Naive thymus-derived CD4-positive, alpha-beta T cell (primary cell): ENCODE measurements at regions of chr2 and their contacts with region 1.

Region 1: DNA sequence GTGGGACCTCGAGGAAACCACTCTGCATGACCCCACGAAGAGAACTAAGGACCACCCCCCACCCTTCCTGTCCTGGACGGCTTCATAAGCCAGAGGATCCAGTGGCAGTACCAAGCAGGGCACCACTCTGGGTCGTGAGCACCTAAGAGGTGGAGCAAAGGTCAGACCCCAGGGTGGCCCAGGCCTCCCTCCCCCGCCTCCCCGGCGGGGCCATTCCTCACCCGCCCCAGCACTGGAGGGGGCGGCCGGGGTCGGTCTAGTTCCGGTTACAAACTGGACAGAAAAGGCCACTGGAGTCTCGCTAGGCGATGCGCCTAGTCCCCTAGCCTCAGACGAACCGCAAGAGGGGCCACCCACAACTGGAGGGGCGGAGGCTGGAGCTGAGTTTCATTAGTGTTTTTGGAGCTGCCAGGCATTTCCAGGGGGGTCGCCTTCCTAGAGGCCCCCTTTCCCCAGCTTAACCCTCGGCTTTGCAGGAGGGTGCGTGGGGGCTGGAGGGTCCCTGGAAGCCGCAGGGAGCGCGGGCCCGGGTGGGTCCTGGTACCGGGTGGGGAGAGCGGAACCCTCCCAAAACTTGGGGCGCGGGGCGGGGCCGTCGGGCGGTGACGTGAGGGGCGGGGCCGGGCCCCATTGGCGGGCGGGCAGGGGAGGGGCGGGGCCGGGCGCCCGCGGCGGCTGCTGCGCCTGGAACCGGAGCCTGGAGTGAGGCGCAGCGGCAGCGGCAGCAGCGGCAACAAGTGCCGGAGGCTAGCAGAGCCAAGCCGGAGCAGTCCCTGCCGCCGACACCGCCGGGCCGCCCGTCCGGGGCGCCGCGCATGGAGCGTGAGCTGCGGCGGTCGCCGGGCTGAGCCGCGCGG is at the start of gene B3GNT2:
- DNase-seq: peak; percentile 66 to 88 (median 80)
- ATAC-seq: peak; percentile 89
- H3K4me3 ChIP-seq: peak within 1 kb of the TSS; percentile 98
- H3K4me3 Mint-ChIP-seq: peak within 1 kb of the TSS; percentile 82 to 93 (median 89)
- H3K27ac ChIP-seq: peak within 1 kb of the TSS; percentile 86
- H3K27ac Mint-ChIP-seq: peak within 1 kb of the TSS in 7 of 9 donors; percentile 83 to 95 (median 91)
- H3K4me1 ChIP-seq: peaks cover 27 to 36% of the 10 kb centered on the region in 2 donors
- H3K4me1 Mint-ChIP-seq: peaks cover 28 to 44% (median 31%) of the 10 kb centered on the region in 7 donors
- H3K27me3 ChIP-seq: no peaks in the 10 kb centered on the region
- H3K27me3 Mint-ChIP-seq: peaks cover 0 to 6% (median 0%) of the 10 kb centered on the region in 5 donors
- total RNA-seq, gene B3GNT2: 16.9 to 37.0 (median 34.7) TPM

Region 2: GRCh38 chr2:60881047-60881932 is 1314.4 kb before region 1 on chr2 and contains the start of gene REL:
- CTCF ChIA-PET with region 1: no interaction called
- POLR2A ChIA-PET with region 1: no interaction called
- intact Hi-C with region 1: loop called in 1 of 2 experiments (anchors 5 kb)
- DNase-seq: peak; percentile 77 to 95 (median 88)
- ATAC-seq: peak; percentile 92
- H3K4me3 ChIP-seq: peak within 1 kb of the TSS; percentile 83
- H3K4me3 Mint-ChIP-seq: peak within 1 kb of the TSS; percentile 91 to 98 (median 96)
- H3K27ac ChIP-seq: peak within 1 kb of the TSS; percentile 100
- H3K27ac Mint-ChIP-seq: peak within 1 kb of the TSS; percentile 93 to 100 (median 98)
- H3K4me1 ChIP-seq: peaks cover 11 to 24% of the 10 kb centered on the region in 2 donors
- H3K4me1 Mint-ChIP-seq: peaks cover 22 to 39% (median 33%) of the 10 kb centered on the region in 7 donors
- H3K27me3 ChIP-seq: no peaks in the 10 kb centered on the region
- H3K27me3 Mint-ChIP-seq: no peaks in the 10 kb centered on the region
- total RNA-seq, gene REL: 18.9 to 78.8 (median 26.4) TPM

Region 3: DNA sequence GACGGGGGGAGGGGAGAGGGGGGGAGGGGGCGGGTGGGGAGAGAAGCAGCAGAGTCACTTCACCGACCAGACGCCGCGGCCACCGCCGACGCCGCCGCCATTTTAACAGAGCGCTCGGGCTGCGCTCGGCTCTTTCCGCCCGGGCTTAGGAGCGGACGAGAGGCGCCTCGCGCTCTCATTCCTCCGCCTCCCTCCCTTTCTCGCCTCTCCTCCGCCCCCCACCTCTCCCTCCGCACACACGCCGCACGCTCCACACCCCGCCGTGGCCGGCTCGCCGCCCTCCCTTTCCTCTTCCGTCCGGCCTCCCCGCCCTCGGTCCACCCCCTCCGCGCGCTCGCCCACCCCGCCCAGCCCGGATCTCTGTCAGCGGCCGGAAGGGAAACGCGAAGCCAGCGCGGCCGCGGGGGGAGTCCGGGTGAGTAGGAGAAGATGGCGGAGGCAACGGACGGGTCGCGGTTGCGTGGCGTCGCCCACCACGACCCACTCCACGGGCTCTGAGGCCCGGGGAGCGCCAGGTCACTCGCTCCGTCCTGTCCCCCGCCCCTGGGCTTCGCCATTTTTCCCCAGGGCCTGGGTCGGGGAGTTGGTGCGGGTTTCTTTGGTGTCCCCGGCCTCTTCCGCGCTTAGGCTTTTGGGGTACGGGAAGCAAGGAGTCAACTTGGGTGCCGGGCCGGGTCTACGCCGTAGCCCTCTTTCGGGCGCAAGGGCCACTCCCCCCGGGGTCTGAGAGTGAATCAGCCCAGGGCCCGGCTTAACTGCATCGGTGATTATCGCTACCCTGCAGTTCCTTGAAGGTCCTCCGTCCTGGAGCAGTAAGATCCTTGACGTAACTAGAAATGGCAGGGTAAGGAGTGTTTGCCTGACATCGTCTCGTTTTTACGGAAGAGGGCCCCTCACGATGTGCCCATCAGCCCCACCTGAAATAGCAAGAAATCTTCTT is 724.4 kb before region 1 on chr2 and contains the start of gene USP34:
- CTCF ChIA-PET with region 1: no interaction called
- POLR2A ChIA-PET with region 1: no interaction called
- intact Hi-C with region 1: loop called in 1 of 2 experiments (anchors 2 kb)
- DNase-seq: peak; percentile 77 to 93 (median 88)
- ATAC-seq: peak; percentile 91
- H3K4me3 ChIP-seq: peak within 1 kb of the TSS; percentile 97
- H3K4me3 Mint-ChIP-seq: peak within 1 kb of the TSS; percentile 85 to 99 (median 96)
- H3K27ac ChIP-seq: peak within 1 kb of the TSS; percentile 98
- H3K27ac Mint-ChIP-seq: peak within 1 kb of the TSS; percentile 96 to 99 (median 97)
- H3K4me1 ChIP-seq: peaks cover 14 to 27% of the 10 kb centered on the region in 2 donors
- H3K4me1 Mint-ChIP-seq: peaks cover 11 to 45% (median 33%) of the 10 kb centered on the region in 7 donors
- H3K27me3 ChIP-seq: no peaks in the 10 kb centered on the region
- H3K27me3 Mint-ChIP-seq: no peaks in the 10 kb centered on the region
- total RNA-seq, gene USP34: 109 to 186 (median 165) TPM

Region 4: GRCh38 chr2:61905372-61906185 is 290.1 kb before region 1 on chr2 and contains the start of gene COMMD1:
- CTCF ChIA-PET with region 1: no interaction called
- POLR2A ChIA-PET with region 1: no interaction called
- intact Hi-C with region 1: loop called (anchors 5 kb)
- DNase-seq: peak; percentile 64 to 81 (median 76)
- ATAC-seq: peak; percentile 99
- H3K4me3 ChIP-seq: peak within 1 kb of the TSS; percentile 76
- H3K4me3 Mint-ChIP-seq: peak within 1 kb of the TSS; percentile 95 to 98 (median 96)
- H3K27ac ChIP-seq: peak within 1 kb of the TSS; percentile 83
- H3K27ac Mint-ChIP-seq: peak within 1 kb of the TSS; percentile 80 to 97 (median 86)
- H3K4me1 ChIP-seq: peaks cover 0 to 12% of the 10 kb centered on the region in 2 donors
- H3K4me1 Mint-ChIP-seq: peaks cover 14 to 42% (median 30%) of the 10 kb centered on the region in 7 donors
- H3K27me3 ChIP-seq: no peaks in the 10 kb centered on the region
- H3K27me3 Mint-ChIP-seq: no peaks in the 10 kb centered on the region
- total RNA-seq, gene COMMD1: 15.6 to 28.3 (median 20.8) TPM

Region 5: GRCh38 chr2:62306751-62307468 is 111.3 kb after region 1 on chr2:
- CTCF ChIA-PET with region 1: no interaction called
- POLR2A ChIA-PET with region 1: no interaction called
- intact Hi-C with region 1: loop called (anchors 2 kb)
- DNase-seq: peak in 1 of 9 donors; percentile 42
- ATAC-seq: peak; percentile 25
- H3K4me3 ChIP-seq: no peak overlapping the region
- H3K4me3 Mint-ChIP-seq: peak overlapping the region in 5 of 10 donors; percentile 23 to 67 (median 54)
- H3K27ac ChIP-seq: no peak overlapping the region
- H3K27ac Mint-ChIP-seq: peak overlapping the region in 7 of 9 donors; percentile 1 to 86 (median 52)
- H3K4me1 ChIP-seq: peaks cover 29 to 84% of the 10 kb centered on the region in 2 donors
- H3K4me1 Mint-ChIP-seq: peaks cover 54 to 79% (median 71%) of the 10 kb centered on the region in 7 donors
- H3K27me3 ChIP-seq: no peaks in the 10 kb centered on the region
- H3K27me3 Mint-ChIP-seq: peaks cover 0 to 2% (median 0%) of the 10 kb centered on the region in 5 donors

Region 6: DNA sequence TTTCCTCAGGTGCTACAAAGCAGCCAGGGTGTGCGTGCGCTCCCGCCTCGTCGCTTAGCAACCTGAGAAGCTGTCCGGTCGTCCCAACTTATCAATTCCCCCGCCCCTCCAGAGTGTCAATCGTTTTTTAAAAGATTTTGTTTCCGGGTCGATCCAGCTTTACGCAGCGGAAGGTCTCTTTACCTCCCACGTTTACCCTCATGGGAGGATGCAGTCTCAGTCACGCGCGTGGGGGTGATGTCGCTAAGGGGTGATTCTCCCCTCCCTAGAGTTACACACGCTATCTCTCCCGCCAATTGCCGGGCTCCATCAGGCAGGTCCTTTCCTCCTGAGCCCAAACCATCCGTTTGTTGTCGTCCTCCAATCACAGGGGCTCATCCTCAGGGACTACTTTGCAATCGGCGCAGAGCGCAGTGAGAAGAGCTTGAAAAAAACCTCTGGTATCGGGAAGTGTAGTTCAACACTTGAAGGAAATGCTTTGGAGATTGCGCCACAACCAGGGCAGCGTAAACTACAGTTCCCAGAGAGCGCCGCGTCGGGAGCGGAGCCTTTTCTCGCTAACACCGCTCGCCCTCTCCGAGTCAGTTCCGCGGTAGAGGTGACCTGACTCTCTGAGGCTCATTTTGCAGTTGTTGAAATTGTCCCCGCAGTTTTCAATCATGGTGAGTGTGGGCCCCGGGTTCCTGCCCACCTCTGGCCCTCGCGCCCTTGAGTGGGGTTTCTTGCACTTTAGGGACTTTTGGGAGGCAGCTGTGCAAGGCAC is 1392.9 kb after region 1 on chr2 and contains the starts of genes MDH1 and WDPCP:
- CTCF ChIA-PET with region 1: no interaction called
- POLR2A ChIA-PET with region 1: no interaction called
- intact Hi-C with region 1: loop called (anchors 1 to 2 kb)
- DNase-seq: peak; percentile 74 to 99 (median 96)
- ATAC-seq: peak; percentile 89
- H3K4me3 ChIP-seq: peak within 1 kb of the TSS; percentile 91
- H3K4me3 Mint-ChIP-seq: peak within 1 kb of the TSS; percentile 89 to 99 (median 94)
- H3K27ac ChIP-seq: peak within 1 kb of the TSS; percentile 89
- H3K27ac Mint-ChIP-seq: peak within 1 kb of the TSS; percentile 89 to 99 (median 95)
- H3K4me1 ChIP-seq: peaks cover 16 to 23% of the 10 kb centered on the region in 2 donors
- H3K4me1 Mint-ChIP-seq: peaks cover 24 to 63% (median 45%) of the 10 kb centered on the region in 7 donors
- H3K27me3 ChIP-seq: no peaks in the 10 kb centered on the region
- H3K27me3 Mint-ChIP-seq: no peaks in the 10 kb centered on the region
- total RNA-seq, gene MDH1: 76.5 to 180 (median 84.2) TPM
- total RNA-seq, gene WDPCP: 7.6 to 19.2 (median 16.1) TPM